ENCODE measurements at regions of chr19 and their contacts with region 1.

Region 1: GRCh38 chr19:19145684-19146608 is 7.7 kb upstream of the TMEM161A start:
- DNase-seq: peak; percentile 49 to 65 (median 49)
- H3K4me3 ChIP-seq: no peak overlapping the region
- H3K4me3 Mint-ChIP-seq: no peak overlapping the region
- H3K27ac ChIP-seq: no peak overlapping the region
- H3K27ac Mint-ChIP-seq: no peak overlapping the region
- H3K4me1 ChIP-seq: peaks cover 3 to 6% of the 10 kb centered on the region in 2 donors
- H3K4me1 Mint-ChIP-seq: no peaks in the 10 kb centered on the region
- H3K27me3 ChIP-seq: no peaks in the 10 kb centered on the region
- H3K27me3 Mint-ChIP-seq: peaks cover 0 to 7% (median 2%) of the 10 kb centered on the region in 3 donors
- CTCF ChIP-seq: peak; percentile 87

Region 2: DNA sequence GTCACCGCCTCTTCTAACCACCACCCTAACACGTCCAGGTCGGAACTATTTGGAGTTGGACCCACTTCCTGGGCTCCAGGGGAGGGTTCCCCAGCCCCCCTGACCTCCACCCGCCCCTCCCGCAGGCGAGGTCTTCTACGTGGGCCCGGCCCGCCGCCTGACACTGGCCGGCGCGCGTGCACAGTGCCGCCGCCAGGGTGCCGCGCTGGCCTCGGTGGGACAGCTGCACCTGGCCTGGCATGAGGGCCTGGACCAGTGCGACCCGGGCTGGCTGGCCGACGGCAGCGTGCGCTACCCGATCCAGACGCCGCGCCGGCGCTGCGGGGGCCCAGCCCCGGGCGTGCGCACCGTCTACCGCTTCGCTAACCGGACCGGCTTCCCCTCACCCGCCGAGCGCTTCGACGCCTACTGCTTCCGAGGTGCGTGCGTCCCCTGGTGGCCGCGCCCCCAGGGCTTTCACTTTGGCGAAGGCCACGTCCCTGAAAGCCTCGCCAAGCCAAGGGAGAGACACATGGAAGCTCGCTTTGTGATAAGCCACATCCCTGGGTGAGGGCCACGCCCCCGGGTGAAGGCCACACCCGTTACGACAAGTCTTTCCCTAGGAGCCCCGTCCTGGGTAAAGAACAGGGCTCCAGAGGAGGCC is 79.0 kb after region 1 on chr19:
- intact Hi-C with region 1: loop called (anchors 2 to 5 kb)
- DNase-seq: peak; percentile 59 to 70 (median 67)
- H3K4me3 ChIP-seq: peak overlapping the region in 2 of 3 experiments; percentile 8 to 72
- H3K4me3 Mint-ChIP-seq: peak overlapping the region; percentile 67 to 80
- H3K27ac ChIP-seq: no peak overlapping the region
- H3K27ac Mint-ChIP-seq: no peak overlapping the region
- H3K4me1 ChIP-seq: peaks cover 8 to 12% of the 10 kb centered on the region in 2 donors
- H3K4me1 Mint-ChIP-seq: peaks cover 6% of the 10 kb centered on the region
- H3K27me3 ChIP-seq: peaks cover 3 to 24% of the 10 kb centered on the region in 2 donors
- H3K27me3 Mint-ChIP-seq: peaks cover 27 to 49% (median 35%) of the 10 kb centered on the region in 3 donors
- CTCF ChIP-seq: peak; percentile 82

Region 3: DNA sequence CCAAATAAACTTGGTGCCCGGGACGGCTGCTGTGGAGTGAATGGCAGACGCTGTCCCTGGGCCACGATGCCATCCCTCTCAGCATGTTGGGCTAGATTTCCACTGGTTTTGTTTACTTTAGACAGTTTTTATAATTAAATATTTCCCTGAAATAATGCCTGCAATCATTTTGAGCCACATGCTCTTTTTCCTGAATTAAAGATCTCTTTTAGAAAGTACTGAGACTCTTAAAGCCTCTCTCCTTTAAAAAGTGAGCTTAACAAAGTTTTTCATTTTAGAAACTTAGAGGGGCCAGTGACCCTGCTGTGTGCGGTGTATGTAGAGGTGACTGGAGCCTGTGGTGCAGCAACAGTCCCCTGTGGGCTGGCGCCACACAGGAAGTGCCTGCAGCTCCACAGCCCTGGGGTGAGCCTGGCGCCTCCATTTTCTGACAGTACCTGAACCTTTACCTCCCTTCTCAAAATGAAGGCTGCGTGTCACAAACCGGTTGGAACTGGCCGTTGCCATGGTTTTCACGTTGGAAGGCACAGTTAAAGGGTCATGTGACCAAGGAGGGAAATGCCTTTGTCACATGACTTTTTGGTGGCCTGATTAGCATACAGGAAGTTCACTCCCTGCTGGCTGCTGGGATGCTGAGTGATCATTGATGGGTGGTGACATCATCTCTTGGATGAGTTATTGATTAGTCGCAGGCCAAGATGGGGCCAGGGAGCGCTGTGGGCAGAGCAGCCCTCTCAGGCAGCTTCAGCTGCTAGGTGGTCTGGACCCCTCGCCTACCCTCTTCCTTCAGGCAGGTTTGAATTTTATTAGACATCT is 343.1 kb after region 1 on chr19:
- intact Hi-C with region 1: loop called in 1 of 2 experiments (anchors 5 kb)
- DNase-seq: peak; percentile 93 to 99 (median 98)
- H3K4me3 ChIP-seq: peak overlapping the region; percentile 0 to 63 (median 9)
- H3K4me3 Mint-ChIP-seq: peak overlapping the region; percentile 62 to 75
- H3K27ac ChIP-seq: peak overlapping the region; percentile 87 to 94
- H3K27ac Mint-ChIP-seq: peak overlapping the region; percentile 94 to 97 (median 96)
- H3K4me1 ChIP-seq: peaks cover 23 to 32% of the 10 kb centered on the region in 2 donors
- H3K4me1 Mint-ChIP-seq: peaks cover 39% of the 10 kb centered on the region
- H3K27me3 ChIP-seq: no peaks in the 10 kb centered on the region
- H3K27me3 Mint-ChIP-seq: peaks cover 0 to 4% (median 0%) of the 10 kb centered on the region in 3 donors
- CTCF ChIP-seq: no peak